Sciatic nerve (tissue), 2 donors: ENCODE measurements at regions of chr7 and their contacts with region 1.

Region 1: GRCh38 chr7:138303943-138304495 is 156.0 kb upstream of the TRIM24 start:
- DNase-seq: no peak
- ATAC-seq: no peak

Region 2: DNA sequence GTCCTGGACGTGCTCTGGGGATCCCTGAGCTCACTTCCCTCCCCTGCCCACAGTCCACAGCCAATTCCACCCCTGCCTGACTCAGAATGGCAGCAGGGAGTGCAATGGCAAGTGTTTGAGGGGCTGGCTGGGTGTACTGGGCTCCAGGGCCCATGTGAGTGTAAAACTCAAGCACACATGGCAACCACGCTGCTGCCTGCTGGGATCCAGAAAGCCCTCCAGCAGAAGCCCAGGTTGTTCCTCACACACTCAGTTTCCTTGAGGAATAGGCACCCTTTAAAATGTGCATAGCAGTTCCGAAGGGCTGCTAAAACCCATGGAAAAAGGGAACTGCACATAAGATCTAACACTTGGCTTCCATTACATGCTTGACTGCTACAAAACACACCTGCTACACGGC is 505.3 kb after region 1 on chr7:
- intact Hi-C with region 1: loop called (anchors 5 kb)
- DNase-seq: no peak
- ATAC-seq: no peak